ENCODE measurements at regions of chr11 and their contacts with region 1.

Region 1: DNA sequence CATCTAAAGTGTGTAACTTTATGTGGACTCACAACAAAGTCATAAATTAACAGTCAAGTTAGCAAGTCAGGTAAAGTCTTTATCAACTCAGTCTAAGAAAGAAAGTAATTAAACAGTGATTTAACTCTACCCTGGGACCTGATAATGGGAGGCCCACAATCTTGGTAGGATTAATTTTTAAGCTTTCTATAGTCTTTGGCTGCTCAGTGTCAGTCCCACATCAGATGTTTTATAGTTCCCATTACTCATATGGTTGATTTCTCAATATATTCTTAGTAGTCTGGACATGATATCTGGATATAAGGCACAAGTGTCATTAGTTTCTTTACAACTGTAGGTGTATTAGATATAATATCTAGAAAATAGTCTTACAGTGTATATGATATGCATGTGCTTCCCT is 38.5 kb upstream of the SCN3B start:
- DNase-seq: no peak
- ATAC-seq: no peak
- H3K4me3 ChIP-seq: no peak overlapping the region
- H3K4me3 Mint-ChIP-seq: no peak overlapping the region
- H3K27ac ChIP-seq: no peak overlapping the region
- H3K27ac Mint-ChIP-seq: no peak overlapping the region
- H3K4me1 ChIP-seq: no peaks in the 10 kb centered on the region
- H3K4me1 Mint-ChIP-seq: no peaks in the 10 kb centered on the region
- H3K27me3 ChIP-seq: peaks cover 3 to 9% of the 10 kb centered on the region in 2 experiments
- H3K27me3 Mint-ChIP-seq: peaks cover 27 to 38% of the 10 kb centered on the region in 2 donors

Region 2: GRCh38 chr11:123640677-123641494 is 52.1 kb before region 1 on chr11:
- CTCF ChIA-PET with region 1: interaction called in 1 of 2 experiments, 11 read pairs
- POLR2A ChIA-PET with region 1: no interaction called
- DNase-seq: peak in 34 of 35 experiments; percentile 2 to 71 (median 45)
- ATAC-seq: peak; percentile 40 to 78 (median 56)
- H3K4me3 ChIP-seq: no peak overlapping the region
- H3K4me3 Mint-ChIP-seq: no peak overlapping the region
- H3K27ac ChIP-seq: no peak overlapping the region
- H3K27ac Mint-ChIP-seq: no peak overlapping the region
- H3K4me1 ChIP-seq: peaks cover 0 to 5% of the 10 kb centered on the region in 2 experiments
- H3K4me1 Mint-ChIP-seq: peaks cover 0 to 2% (median 0%) of the 10 kb centered on the region in 3 donors
- H3K27me3 ChIP-seq: peaks cover 0 to 30% of the 10 kb centered on the region in 2 experiments
- H3K27me3 Mint-ChIP-seq: peaks cover 18 to 32% of the 10 kb centered on the region in 2 donors